B cell (primary cell): ENCODE measurements at regions of chr18 and their contacts with region 1.

Region 1: DNA sequence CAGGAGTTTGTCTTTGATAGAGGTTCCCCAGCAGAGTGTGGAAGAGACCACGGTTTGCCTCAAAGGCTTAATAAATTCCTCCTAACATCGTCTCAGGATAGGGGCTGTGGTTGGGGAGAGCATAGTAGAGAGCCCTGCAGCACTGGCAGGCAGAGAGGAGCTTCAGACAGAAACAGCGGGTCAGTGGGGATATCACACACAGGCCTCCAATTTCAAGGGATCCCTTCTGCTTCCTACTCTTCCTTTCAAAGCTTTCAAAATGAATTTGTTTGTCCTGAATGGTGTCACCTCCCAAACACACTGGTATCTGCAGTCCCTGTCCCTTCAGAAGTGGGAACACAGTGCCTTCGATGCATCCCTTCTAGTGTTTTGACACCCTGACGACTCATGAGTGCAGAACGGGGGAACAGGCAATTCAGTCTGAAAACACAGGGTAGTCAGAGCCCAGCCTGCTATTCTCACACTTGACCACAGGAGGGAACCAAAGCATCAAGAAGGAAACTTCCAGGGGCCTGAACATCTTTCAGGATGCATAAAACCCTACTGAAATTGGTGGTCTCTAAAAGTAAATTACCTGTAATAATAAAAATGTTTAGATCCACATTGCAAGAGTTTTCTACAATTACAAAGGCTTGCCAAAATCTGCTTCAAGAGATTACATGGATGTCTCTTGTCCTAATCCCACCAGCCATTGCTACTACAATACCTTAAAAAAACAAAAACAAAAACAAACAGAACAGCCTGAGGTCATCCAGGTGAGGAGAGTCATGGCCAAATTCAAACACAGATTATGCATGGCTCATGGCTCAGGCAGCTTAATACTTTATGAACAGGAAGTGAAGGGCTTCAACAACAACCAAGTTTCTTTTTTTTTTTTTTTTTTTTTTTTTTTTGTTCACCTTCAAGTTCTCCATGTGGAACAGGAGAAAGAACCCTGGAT is 49.8 kb downstream of the SLC14A2 start:
- DNase-seq: peak; percentile 78
- ATAC-seq: peak; percentile 82
- H3K4me3 ChIP-seq: no peak overlapping the region
- H3K4me3 Mint-ChIP-seq: no peak overlapping the region
- H3K27ac ChIP-seq: no peak overlapping the region
- H3K27ac Mint-ChIP-seq: peak overlapping the region; percentile 67
- H3K4me1 ChIP-seq: peaks cover 13 to 26% of the 10 kb centered on the region in 2 donors
- H3K4me1 Mint-ChIP-seq: peaks cover 39% of the 10 kb centered on the region
- H3K27me3 ChIP-seq: no peaks in the 10 kb centered on the region
- H3K27me3 Mint-ChIP-seq: no peaks in the 10 kb centered on the region
- CTCF ChIP-seq: peak; percentile 97

Region 2: DNA sequence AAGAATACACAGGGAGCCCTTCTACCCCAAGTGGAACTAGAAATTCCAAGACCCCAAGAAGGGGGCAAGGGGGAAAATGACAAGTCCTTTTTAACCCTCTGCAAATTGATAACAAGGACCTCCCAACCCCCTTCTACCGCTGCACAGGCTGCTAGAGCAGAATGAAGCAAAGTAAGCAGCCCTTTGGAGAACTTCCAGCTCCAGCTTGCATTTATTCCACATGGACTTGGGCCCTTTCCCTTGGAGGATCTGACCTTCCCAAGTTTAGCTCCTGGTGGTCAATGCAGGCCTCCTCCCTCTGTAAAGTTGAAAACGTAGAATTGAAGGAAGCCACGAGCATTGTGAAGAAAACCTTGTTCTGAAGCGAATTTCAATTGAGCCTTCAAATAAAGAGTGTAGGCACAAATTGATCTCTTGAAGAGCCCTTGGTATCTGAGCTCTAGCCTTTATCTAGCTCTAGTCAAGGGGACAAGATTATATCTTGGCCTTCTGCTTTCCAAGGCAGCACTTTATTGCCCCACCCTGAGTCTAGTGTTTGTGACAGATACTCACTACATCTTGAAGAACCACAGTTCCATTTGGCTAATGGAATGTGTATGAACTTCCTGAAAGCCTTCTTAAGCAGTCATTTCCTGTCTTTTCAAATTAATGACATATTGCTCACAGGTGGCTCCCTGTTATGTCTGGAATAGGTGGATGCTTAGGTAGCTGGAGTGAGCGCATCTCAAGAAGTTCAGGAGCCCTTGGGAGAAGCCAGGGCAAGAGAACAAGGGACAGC is 12.6 kb before region 1 on chr18:
- CTCF ChIA-PET with region 1: interaction called, 14 read pairs
- POLR2A ChIA-PET with region 1: no interaction called
- intact Hi-C with region 1: no loop called
- DNase-seq: no peak
- ATAC-seq: no peak
- H3K4me3 ChIP-seq: no peak overlapping the region
- H3K4me3 Mint-ChIP-seq: no peak overlapping the region
- H3K27ac ChIP-seq: no peak overlapping the region
- H3K27ac Mint-ChIP-seq: no peak overlapping the region
- H3K4me1 ChIP-seq: no peaks in the 10 kb centered on the region
- H3K4me1 Mint-ChIP-seq: no peaks in the 10 kb centered on the region
- H3K27me3 ChIP-seq: no peaks in the 10 kb centered on the region
- H3K27me3 Mint-ChIP-seq: peaks cover 31% of the 10 kb centered on the region
- CTCF ChIP-seq: no peak

Region 3: DNA sequence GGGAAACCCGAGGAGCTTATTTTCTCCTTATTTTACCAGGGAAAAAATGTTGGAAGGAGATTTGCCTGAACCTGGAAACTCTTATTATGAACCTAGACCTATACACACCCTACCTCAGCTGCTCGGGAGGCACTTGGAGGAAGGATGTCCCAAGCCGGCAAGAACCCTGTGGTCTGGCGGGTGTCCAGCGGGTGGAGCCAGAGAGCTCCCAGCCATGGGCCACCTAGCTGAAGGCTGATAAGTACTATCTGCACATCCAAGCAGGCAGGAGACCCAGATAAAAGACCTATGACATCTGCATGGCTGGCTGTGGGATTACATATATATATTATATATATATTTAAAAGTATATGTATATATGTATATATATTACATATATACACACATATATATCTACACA is 57.8 kb after region 1 on chr18:
- CTCF ChIA-PET with region 1: interaction called, 18 read pairs
- POLR2A ChIA-PET with region 1: no interaction called
- intact Hi-C with region 1: loop called (anchors 2 kb)
- DNase-seq: peak; percentile 46
- ATAC-seq: peak; percentile 69
- H3K4me3 ChIP-seq: no peak overlapping the region
- H3K4me3 Mint-ChIP-seq: no peak overlapping the region
- H3K27ac ChIP-seq: no peak overlapping the region
- H3K27ac Mint-ChIP-seq: no peak overlapping the region
- H3K4me1 ChIP-seq: no peaks in the 10 kb centered on the region
- H3K4me1 Mint-ChIP-seq: no peaks in the 10 kb centered on the region
- H3K27me3 ChIP-seq: no peaks in the 10 kb centered on the region
- H3K27me3 Mint-ChIP-seq: peaks cover 6% of the 10 kb centered on the region
- CTCF ChIP-seq: peak; percentile 78

Region 4: DNA sequence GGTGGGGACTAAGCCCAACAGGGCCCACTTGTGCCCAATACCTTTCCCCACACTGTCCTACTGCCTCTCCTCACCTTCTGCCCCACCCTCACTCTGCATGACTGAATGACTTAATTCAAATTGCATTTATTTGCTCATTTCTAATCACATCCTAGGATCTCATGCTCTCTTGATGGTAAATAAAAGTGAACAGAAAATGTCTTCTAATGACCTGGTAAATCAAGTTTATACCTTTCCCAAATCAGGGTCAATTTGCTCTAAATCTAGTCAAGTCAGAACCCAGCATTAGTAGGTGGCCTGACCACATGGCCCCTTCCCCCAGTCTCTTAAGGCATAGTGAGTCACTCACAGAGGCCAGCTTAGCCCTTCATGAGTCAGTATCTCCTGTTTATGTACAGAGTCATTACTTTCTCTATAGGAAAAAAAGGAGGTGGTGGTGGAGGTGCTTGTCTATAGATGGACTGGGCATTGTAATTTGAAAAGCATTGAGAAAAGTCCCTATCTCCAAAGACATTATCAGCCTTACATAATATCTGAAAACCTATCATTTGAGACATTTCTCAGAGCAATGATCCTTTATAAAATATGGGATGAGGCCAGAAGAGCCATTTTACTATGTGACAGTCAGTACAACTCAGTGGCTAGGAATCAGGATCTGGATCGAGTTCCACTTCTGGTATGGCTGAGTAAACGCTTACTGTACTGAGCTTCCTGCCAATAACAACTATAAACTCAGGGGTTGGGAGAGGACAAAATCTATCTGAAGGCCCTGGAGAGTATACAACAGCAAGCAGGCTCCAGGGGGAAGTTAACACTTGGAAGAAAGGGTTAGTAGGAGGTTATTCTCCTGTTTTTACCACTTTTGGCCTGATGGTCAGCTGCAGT is 137.8 kb after region 1 on chr18:
- CTCF ChIA-PET with region 1: interaction called, 11 read pairs
- POLR2A ChIA-PET with region 1: no interaction called
- intact Hi-C with region 1: loop called (anchors 1 kb)
- DNase-seq: no peak
- ATAC-seq: no peak
- H3K4me3 ChIP-seq: no peak overlapping the region
- H3K4me3 Mint-ChIP-seq: no peak overlapping the region
- H3K27ac ChIP-seq: no peak overlapping the region
- H3K27ac Mint-ChIP-seq: no peak overlapping the region
- H3K4me1 ChIP-seq: no peaks in the 10 kb centered on the region
- H3K4me1 Mint-ChIP-seq: no peaks in the 10 kb centered on the region
- H3K27me3 ChIP-seq: peaks cover 0 to 9% (median 3%) of the 10 kb centered on the region in 4 experiments
- H3K27me3 Mint-ChIP-seq: peaks cover 32% of the 10 kb centered on the region
- CTCF ChIP-seq: no peak

Region 5: GRCh38 chr18:45910405-45911023 is 245.4 kb after region 1 on chr18:
- CTCF ChIA-PET with region 1: interaction called, 60 read pairs
- POLR2A ChIA-PET with region 1: no interaction called
- intact Hi-C with region 1: loop called (anchors 1 kb)
- DNase-seq: peak; percentile 57
- ATAC-seq: peak; percentile 33
- H3K4me3 ChIP-seq: no peak overlapping the region
- H3K4me3 Mint-ChIP-seq: no peak overlapping the region
- H3K27ac ChIP-seq: no peak overlapping the region
- H3K27ac Mint-ChIP-seq: no peak overlapping the region
- H3K4me1 ChIP-seq: no peaks in the 10 kb centered on the region
- H3K4me1 Mint-ChIP-seq: no peaks in the 10 kb centered on the region
- H3K27me3 ChIP-seq: no peaks in the 10 kb centered on the region
- H3K27me3 Mint-ChIP-seq: no peaks in the 10 kb centered on the region
- CTCF ChIP-seq: peak; percentile 71

Region 6: DNA sequence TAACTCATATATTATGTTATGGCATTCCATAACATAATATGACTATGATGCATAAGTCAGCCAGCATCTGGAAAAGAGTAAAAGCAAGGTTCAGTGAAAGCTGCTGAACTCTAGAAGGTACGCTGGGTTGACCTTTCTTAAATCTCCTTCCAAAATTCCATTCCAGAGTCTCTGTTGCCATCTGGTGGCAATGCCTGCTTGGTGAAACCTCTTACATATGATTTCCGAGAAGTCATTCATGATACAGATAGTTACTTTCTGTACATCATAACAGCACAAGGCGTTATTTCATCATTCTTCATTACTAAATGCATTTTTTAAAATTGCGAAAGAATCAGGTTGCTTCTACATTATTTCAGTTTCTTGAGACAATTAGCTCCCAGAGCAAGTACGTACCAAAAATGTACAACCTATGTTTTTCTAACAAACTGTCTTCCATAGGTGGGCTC is 309.0 kb after region 1 on chr18:
- CTCF ChIA-PET with region 1: interaction called, 22 read pairs
- POLR2A ChIA-PET with region 1: no interaction called
- intact Hi-C with region 1: loop called (anchors 1 kb)
- DNase-seq: peak; percentile 67
- ATAC-seq: no peak
- H3K4me3 ChIP-seq: no peak overlapping the region
- H3K4me3 Mint-ChIP-seq: no peak overlapping the region
- H3K27ac ChIP-seq: no peak overlapping the region
- H3K27ac Mint-ChIP-seq: no peak overlapping the region
- H3K4me1 ChIP-seq: no peaks in the 10 kb centered on the region
- H3K4me1 Mint-ChIP-seq: peaks cover 3% of the 10 kb centered on the region
- H3K27me3 ChIP-seq: no peaks in the 10 kb centered on the region
- H3K27me3 Mint-ChIP-seq: no peaks in the 10 kb centered on the region
- CTCF ChIP-seq: peak; percentile 67

Region 7: DNA sequence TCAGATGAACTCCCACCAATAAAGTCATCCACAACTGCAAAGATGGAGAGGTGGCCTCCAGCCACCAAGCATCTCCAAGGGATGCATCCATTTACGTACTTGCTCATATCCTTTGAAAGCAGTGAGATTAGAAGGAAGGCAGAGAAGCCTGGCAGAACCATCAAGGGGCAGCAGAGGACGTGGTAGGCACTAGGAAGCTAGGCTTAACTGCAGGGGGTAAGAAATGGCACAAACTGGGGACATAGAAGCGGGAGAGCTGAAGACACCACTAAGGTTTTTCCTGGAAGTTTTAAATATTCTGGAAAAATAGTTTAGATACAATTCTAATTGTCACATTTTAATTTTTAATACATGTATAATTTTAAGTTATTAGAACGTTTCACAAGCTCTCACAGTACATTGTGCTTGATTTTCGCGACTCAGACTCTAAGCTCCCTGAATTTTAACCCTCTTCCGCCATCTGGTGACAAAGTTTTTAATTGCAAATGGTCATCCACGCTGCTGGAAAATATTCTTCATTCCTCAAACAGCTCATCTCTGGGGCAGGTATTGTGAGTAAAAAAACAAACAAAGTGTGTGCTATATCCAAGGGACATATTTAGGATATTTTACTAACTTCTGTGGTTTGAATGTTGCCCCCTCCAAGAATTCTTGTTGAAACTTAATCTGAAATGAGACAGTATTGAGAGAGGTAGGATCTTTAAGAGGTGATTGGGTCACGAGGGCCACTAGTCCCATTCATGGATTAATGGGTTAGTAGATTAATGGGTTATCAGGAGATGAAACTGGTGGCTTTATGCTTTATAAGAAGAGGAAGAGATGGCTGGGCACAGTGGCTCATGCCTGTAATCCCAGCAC is 408.6 kb after region 1 on chr18:
- CTCF ChIA-PET with region 1: interaction called, 59 read pairs
- POLR2A ChIA-PET with region 1: no interaction called
- intact Hi-C with region 1: loop called (anchors 1 kb)
- DNase-seq: peak; percentile 69
- ATAC-seq: peak; percentile 54
- H3K4me3 ChIP-seq: no peak overlapping the region
- H3K4me3 Mint-ChIP-seq: no peak overlapping the region
- H3K27ac ChIP-seq: no peak overlapping the region
- H3K27ac Mint-ChIP-seq: no peak overlapping the region
- H3K4me1 ChIP-seq: peaks cover 17 to 26% of the 10 kb centered on the region in 2 donors
- H3K4me1 Mint-ChIP-seq: peaks cover 19% of the 10 kb centered on the region
- H3K27me3 ChIP-seq: peaks cover 0 to 34% (median 13%) of the 10 kb centered on the region in 4 experiments
- H3K27me3 Mint-ChIP-seq: peaks cover 6% of the 10 kb centered on the region
- CTCF ChIP-seq: peak; percentile 78